Heart left ventricle (tissue), 16 donors: ENCODE measurements at regions of chr9 and their contacts with region 1.

Region 1: DNA sequence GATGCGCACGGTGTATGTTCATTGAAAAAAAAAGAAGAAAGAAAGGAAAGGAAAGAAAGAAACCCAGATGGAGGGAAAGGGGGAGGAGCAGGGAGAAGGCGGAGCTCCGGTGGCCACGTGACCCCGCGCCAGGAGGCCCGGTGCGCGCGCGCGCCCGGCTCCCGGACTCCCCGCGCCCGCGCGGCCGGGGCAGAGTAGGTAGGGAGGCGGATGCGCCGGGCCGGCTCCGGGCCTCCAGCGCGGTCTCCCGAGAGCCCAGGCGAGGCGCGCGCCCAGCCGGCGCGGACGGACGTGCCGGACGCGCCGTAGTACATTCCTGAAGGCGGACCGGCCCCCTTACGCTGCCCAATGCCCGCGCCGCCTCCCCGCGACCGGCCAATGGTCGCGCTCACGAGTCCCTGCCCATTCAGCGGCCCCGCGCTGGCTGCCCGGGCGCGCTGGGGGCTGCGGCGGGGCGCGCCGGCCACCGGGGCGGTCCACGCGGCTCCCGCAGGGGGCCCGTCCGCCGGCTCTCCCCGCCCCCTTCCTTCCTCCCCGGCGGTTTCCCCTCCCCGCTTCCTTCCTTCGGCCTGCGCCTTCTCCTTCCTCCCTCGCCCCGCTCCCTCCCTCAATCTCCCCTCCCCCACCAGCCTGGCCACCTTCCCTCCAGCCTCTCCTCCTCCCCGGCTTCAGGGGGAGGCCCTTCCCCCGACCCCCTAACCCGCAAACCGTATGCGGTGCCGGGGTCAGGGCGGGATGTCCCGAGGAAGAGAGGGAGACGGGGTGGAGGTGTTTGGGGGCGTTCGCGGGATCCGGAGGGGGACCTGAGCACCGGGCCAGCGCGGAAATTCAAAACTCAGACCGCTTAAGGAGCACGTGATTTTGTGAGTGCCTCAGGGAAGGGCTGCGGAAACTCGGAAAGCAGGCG is 5.8 kb downstream of the PTCH1 start:
- DNase-seq: peak; percentile 88 to 93 (median 92)
- ATAC-seq: peak; percentile 74 to 86 (median 80)
- H3K4me3 ChIP-seq: peak overlapping the region; percentile 42 to 96 (median 74)
- H3K27ac ChIP-seq: peak overlapping the region; percentile 43 to 99 (median 92)
- H3K4me1 ChIP-seq: peaks cover 3 to 44% (median 15%) of the 10 kb centered on the region in 12 donors
- H3K27me3 ChIP-seq: peaks cover 0 to 52% (median 0%) of the 10 kb centered on the region in 9 donors
- CTCF ChIP-seq: no peak
- POLR2A ChIP-seq: peak; percentile 9 to 64

Region 2: GRCh38 chr9:95317119-95317892 is 193.7 kb before region 1 on chr9 and contains the start of gene FANCC:
- intact Hi-C with region 1: loop called in 8 of 10 experiments (anchors 2 to 10 kb)
- DNase-seq: peak; percentile 94 to 96 (median 95)
- ATAC-seq: peak; percentile 95 to 98 (median 97)
- H3K4me3 ChIP-seq: peak within 1 kb of the TSS; percentile 68 to 100 (median 85)
- H3K27ac ChIP-seq: peak within 1 kb of the TSS; percentile 61 to 100 (median 94)
- H3K4me1 ChIP-seq: peaks cover 0 to 15% (median 5%) of the 10 kb centered on the region in 12 donors
- H3K27me3 ChIP-seq: no peaks in the 10 kb centered on the region
- CTCF ChIP-seq: peak in 2 of 12 donors; percentile 1 to 11
- POLR2A ChIP-seq: peak in 1 of 2 donors; percentile 43
- total RNA-seq, gene FANCC: 2.9 to 6.2 (median 4.2) TPM

Region 3: GRCh38 chr9:95462249-95463147 is 48.5 kb before region 1 on chr9:
- intact Hi-C with region 1: loop called in 2 of 10 experiments (anchors 5 to 10 kb)
- DNase-seq: peak; percentile 62 to 77 (median 75)
- ATAC-seq: peak; percentile 81 to 97 (median 90)
- H3K4me3 ChIP-seq: peak overlapping the region in 11 of 12 donors; percentile 18 to 55 (median 44)
- H3K27ac ChIP-seq: peak overlapping the region in 11 of 12 donors; percentile 29 to 71 (median 57)
- H3K4me1 ChIP-seq: peaks cover 0 to 24% (median 16%) of the 10 kb centered on the region in 12 donors
- H3K27me3 ChIP-seq: peaks cover 0 to 4% (median 0%) of the 10 kb centered on the region in 9 donors
- CTCF ChIP-seq: no peak
- POLR2A ChIP-seq: no peak

Region 4: GRCh38 chr9:95626885-95627558 is 116.1 kb after region 1 on chr9:
- intact Hi-C with region 1: loop called in 4 of 10 experiments (anchors 5 to 10 kb)
- DNase-seq: peak; percentile 66 to 81 (median 72)
- ATAC-seq: peak; percentile 88 to 96 (median 91)
- H3K4me3 ChIP-seq: peak overlapping the region in 4 of 12 donors; percentile 10 to 27 (median 20)
- H3K27ac ChIP-seq: peak overlapping the region; percentile 32 to 87 (median 72)
- H3K4me1 ChIP-seq: peaks cover 0 to 12% (median 0%) of the 10 kb centered on the region in 12 donors
- H3K27me3 ChIP-seq: no peaks in the 10 kb centered on the region
- CTCF ChIP-seq: no peak
- POLR2A ChIP-seq: no peak

Region 5: GRCh38 chr9:95783426-95783975 is 272.5 kb after region 1 on chr9:
- intact Hi-C with region 1: no loop called
- DNase-seq: no peak
- ATAC-seq: no peak
- H3K4me3 ChIP-seq: no peak overlapping the region
- H3K27ac ChIP-seq: no peak overlapping the region
- H3K4me1 ChIP-seq: peaks cover 0 to 5% (median 0%) of the 10 kb centered on the region in 12 donors
- H3K27me3 ChIP-seq: peaks cover 0 to 4% (median 0%) of the 10 kb centered on the region in 9 donors
- CTCF ChIP-seq: no peak
- POLR2A ChIP-seq: no peak

Region 6: DNA sequence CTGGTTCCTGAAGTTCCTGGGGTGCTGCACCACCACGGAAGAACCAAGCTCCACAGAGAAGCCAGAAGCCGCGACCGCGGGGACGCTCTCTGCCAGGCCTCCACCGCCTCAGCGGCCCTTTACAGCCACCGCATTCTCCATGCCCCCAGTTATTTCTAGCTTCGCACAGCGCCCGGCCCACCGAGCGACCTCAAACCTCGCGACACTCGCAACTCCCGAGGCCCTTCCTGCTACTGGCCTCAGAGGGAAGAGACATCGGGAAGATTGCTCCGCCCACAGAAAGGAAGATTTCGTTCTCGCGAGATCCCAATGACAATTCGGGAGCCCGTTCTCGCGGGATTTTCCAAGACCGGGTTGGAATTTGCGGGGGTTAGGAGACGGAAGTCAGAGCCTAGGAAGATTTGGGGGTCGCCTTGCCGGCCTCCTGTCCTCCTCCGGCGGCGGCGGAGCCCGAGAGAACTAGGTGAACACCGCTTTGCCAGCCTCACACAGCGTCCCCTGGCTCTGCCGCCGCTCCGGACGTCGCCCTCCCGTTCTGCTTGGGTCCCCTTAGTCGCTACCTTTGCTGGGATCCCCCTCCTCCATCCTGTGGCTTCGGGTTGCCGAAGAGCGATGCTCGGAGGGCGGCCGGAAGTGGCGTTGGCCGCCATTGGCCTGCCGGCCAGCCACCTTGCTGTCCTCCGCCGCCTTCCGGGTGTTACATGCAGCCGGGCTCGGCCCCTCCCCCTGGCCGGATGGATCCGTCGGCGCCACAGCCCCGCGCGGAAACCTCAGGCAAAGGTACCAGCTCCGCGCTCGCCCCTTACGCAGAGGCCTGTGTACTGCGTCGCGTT is 364.6 kb after region 1 on chr9 and contains the start of gene ERCC6L2:
- intact Hi-C with region 1: loop called in 9 of 10 experiments (anchors 2 to 10 kb)
- DNase-seq: peak; percentile 95 to 97 (median 96)
- ATAC-seq: peak; percentile 97 to 98 (median 97)
- H3K4me3 ChIP-seq: peak within 1 kb of the TSS in 2 of 12 donors; percentile 62 to 78
- H3K27ac ChIP-seq: peak within 1 kb of the TSS in 4 of 12 donors; percentile 98 to 100 (median 99)
- H3K4me1 ChIP-seq: peaks cover 0 to 27% (median 20%) of the 10 kb centered on the region in 12 donors
- H3K27me3 ChIP-seq: no peaks in the 10 kb centered on the region
- CTCF ChIP-seq: peak in 3 of 12 donors; percentile 6 to 16 (median 15)
- POLR2A ChIP-seq: peak in 1 of 2 donors; percentile 68
- total RNA-seq, gene ERCC6L2: 21.3 to 46.8 (median 27.6) TPM